ENCODE measurements at regions of chr20 and their contacts with region 1.

Region 1: GRCh38 chr20:1375515-1375914 is 17.3 kb downstream of the FKBP1A start:
- H3K4me3 Mint-ChIP-seq: peak overlapping the region; percentile 56
- H3K27ac Mint-ChIP-seq: peak overlapping the region; percentile 73
- H3K4me1 Mint-ChIP-seq: peaks cover 95% of the 10 kb centered on the region
- H3K27me3 Mint-ChIP-seq: no peaks in the 10 kb centered on the region

Region 2: GRCh38 chr20:916125-916799 is 459.3 kb before region 1 on chr20 and contains the start of gene ANGPT4:
- intact Hi-C with region 1: no loop called
- H3K4me3 Mint-ChIP-seq: no peak within 1 kb of the TSS
- H3K27ac Mint-ChIP-seq: no peak within 1 kb of the TSS
- H3K4me1 Mint-ChIP-seq: peaks cover 62% of the 10 kb centered on the region
- H3K27me3 Mint-ChIP-seq: peaks cover 42% of the 10 kb centered on the region

Region 3: DNA sequence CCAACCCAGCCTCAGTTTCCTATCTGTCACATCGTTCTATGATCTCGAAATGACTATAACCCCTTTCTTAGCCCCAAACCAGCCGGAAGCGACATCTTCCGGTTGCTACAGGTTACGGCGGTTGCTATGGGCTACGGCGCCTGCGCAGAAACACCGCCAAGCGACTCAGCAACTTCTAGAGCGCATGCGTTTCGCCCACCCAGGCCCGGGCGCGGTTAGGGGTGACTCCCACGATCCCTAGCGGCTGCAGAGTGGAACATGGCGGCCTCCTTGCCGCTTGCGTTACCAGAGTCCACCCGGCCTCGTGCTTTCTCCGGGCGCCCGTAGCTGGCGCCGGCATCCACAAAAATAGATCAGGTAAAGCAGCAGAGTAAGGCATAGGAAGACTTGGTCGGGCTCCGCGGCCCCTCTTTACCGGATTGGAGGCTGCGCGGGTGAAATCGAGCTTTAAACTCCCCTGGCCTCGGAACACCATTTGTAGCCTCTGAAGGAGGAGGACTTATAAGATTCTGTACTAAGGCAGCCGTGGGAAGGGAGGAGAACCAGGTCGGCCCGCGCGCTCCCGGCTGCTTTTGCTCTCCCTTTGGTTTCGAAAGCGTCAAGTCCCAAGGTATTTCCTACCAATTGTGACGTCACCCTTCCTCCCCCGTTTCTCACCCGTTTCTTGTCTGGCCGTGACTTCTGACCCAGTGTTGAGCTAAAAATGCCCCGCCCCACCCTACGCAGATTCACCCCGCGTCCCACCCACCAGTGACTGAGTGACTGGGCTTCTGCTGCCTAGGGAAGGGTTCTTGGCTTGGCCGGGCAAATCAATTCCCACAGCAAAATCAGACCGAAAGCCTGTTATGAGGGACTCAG is 50.1 kb before region 1 on chr20:
- intact Hi-C with region 1: loop called (anchors 2 kb)
- H3K4me3 Mint-ChIP-seq: no peak overlapping the region
- H3K27ac Mint-ChIP-seq: no peak overlapping the region
- H3K4me1 Mint-ChIP-seq: peaks cover 29% of the 10 kb centered on the region
- H3K27me3 Mint-ChIP-seq: no peaks in the 10 kb centered on the region

Region 4: GRCh38 chr20:1336699-1337367 is 38.7 kb before region 1 on chr20:
- intact Hi-C with region 1: no loop called
- H3K4me3 Mint-ChIP-seq: no peak overlapping the region
- H3K27ac Mint-ChIP-seq: peak overlapping the region; percentile 41
- H3K4me1 Mint-ChIP-seq: peaks cover 61% of the 10 kb centered on the region
- H3K27me3 Mint-ChIP-seq: peaks cover 8% of the 10 kb centered on the region

Region 5: GRCh38 chr20:1392823-1393506 is 17.4 kb after region 1 on chr20 and contains the start of gene FKBP1A:
- intact Hi-C with region 1: loop called (anchors 2 kb)
- H3K4me3 Mint-ChIP-seq: peak within 1 kb of the TSS; percentile 84
- H3K27ac Mint-ChIP-seq: peak within 1 kb of the TSS; percentile 90
- H3K4me1 Mint-ChIP-seq: peaks cover 63% of the 10 kb centered on the region
- H3K27me3 Mint-ChIP-seq: peaks cover 13% of the 10 kb centered on the region

Region 6: DNA sequence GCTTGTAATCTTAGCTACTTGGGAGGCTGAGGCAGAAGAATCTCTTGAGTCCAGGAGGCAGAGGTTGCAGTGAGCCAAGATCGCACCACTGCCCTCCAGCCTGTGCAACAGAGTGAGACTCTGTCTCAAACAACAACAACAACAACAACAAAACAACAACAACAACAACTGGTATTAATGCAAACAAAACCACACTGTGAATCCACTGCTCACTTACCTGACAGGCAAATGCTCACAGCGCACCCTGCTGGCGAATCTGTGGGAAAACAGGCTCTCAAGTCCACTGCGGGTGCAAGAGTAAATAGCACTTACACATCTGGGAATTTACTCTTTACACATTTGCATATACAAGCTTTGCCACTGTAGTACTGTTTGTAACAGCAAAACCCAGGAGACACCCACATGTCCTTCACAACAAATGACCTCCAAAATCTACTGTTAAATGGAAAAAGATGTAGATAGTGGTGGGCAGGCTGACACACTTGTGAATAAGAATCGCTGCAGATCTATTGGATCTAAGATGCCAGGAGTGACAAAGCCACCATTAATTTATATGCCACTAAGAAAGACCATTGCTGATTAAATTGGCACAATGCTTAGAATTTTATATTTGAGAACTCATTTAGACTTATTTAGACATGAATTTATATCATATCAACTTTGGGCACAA is 61.9 kb after region 1 on chr20:
- intact Hi-C with region 1: loop called (anchors 5 kb)
- H3K4me3 Mint-ChIP-seq: no peak overlapping the region
- H3K27ac Mint-ChIP-seq: no peak overlapping the region
- H3K4me1 Mint-ChIP-seq: peaks cover 23% of the 10 kb centered on the region
- H3K27me3 Mint-ChIP-seq: peaks cover 7% of the 10 kb centered on the region

Region 7: GRCh38 chr20:1491281-1491840 is 115.8 kb after region 1 on chr20 and contains the start of gene SIRPB2:
- intact Hi-C with region 1: loop called (anchors 5 kb)
- H3K4me3 Mint-ChIP-seq: peak within 1 kb of the TSS; percentile 88
- H3K27ac Mint-ChIP-seq: peak within 1 kb of the TSS; percentile 98
- H3K4me1 Mint-ChIP-seq: peaks cover 79% of the 10 kb centered on the region
- H3K27me3 Mint-ChIP-seq: no peaks in the 10 kb centered on the region